Aorta (tissue), 5 donors: ENCODE measurements at regions of chrX and their contacts with region 1.

Region 1: GRCh38 chrX:23901805-23902204 is 5.9 kb downstream of the APOO start:
- DNase-seq: no peak
- ATAC-seq: peak; percentile 93
- H3K4me3 ChIP-seq: peak overlapping the region in 1 of 2 donors; percentile 41
- H3K27ac ChIP-seq: peak overlapping the region in 1 of 2 donors; percentile 63
- H3K4me1 ChIP-seq: no peaks in the 10 kb centered on the region
- H3K27me3 ChIP-seq: no peaks in the 10 kb centered on the region

Region 2: GRCh38 chrX:23483396-23483795 is 418.4 kb before region 1 on chrX:
- intact Hi-C with region 1: no loop called
- DNase-seq: no peak
- ATAC-seq: no peak
- H3K4me3 ChIP-seq: no peak overlapping the region
- H3K27ac ChIP-seq: no peak overlapping the region
- H3K4me1 ChIP-seq: no peaks in the 10 kb centered on the region
- H3K27me3 ChIP-seq: no peaks in the 10 kb centered on the region

Region 3: GRCh38 chrX:23694606-23695005 is 207.2 kb before region 1 on chrX:
- intact Hi-C with region 1: loop called (anchors 2 to 5 kb)
- DNase-seq: peak in 1 of 2 donors; percentile 64
- ATAC-seq: no peak
- H3K4me3 ChIP-seq: no peak overlapping the region
- H3K27ac ChIP-seq: no peak overlapping the region
- H3K4me1 ChIP-seq: no peaks in the 10 kb centered on the region
- H3K27me3 ChIP-seq: no peaks in the 10 kb centered on the region

Region 4: DNA sequence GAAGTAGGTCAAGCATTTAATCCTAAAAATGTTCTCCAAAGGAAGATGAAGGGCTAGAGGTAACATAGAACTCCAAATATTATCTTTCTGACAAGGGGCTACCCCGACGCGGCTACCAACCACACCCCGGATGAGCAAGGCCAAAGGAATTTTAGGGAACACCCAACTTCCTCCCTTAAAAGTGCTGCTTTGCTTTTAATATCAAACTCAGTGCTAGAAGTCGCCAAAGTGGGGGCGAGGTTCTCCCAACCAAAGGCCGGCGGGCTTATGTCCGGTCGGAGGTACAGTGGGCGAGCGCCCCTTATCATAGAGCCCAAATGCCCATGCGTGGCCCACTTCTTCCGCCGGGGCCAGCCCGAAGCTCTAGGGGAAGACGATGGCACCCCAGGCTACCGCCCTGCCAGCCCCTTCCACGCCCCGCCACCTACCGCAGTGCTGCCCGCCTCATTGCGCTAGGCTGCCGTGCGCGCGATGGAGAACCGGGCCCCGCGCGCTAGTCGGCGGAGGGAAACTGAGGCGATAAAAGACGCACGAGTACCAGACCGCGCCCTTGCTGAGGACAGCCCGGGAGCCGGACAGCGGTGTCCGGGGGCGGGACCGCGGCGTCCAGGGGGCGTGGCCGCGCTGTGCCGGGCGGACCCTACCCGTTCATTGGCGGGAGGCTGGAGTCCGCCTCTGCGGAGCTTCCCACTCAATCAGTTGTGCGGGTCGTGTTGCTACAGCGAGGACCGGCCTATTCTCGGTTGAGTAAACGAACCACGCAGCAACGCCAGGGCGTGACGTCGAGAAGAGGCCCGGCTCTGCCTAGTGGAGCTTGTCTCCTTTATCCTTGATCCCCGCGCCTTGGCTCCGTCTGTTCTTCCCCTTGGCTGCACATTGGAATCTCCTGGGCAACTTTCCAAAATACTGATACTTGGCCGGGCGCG is 158.8 kb before region 1 on chrX and contains the start of gene ACOT9:
- intact Hi-C with region 1: loop called in 1 of 2 experiments (anchors 5 kb)
- DNase-seq: peak; percentile 95 to 96
- ATAC-seq: peak; percentile 97
- H3K4me3 ChIP-seq: peak within 1 kb of the TSS; percentile 46 to 94
- H3K27ac ChIP-seq: peak within 1 kb of the TSS; percentile 76 to 99
- H3K4me1 ChIP-seq: no peaks in the 10 kb centered on the region
- H3K27me3 ChIP-seq: no peaks in the 10 kb centered on the region
- total RNA-seq, gene ACOT9: 59.1 to 69.1 TPM

Region 5: GRCh38 chrX:23782863-23783568 is 118.8 kb before region 1 on chrX and contains the start of gene SAT1:
- intact Hi-C with region 1: loop called (anchors 2 kb)
- DNase-seq: peak; percentile 97 to 98
- ATAC-seq: peak; percentile 97
- H3K4me3 ChIP-seq: peak within 1 kb of the TSS; percentile 78 to 95
- H3K27ac ChIP-seq: peak within 1 kb of the TSS; percentile 23 to 98
- H3K4me1 ChIP-seq: no peaks in the 10 kb centered on the region
- H3K27me3 ChIP-seq: no peaks in the 10 kb centered on the region
- total RNA-seq, gene SAT1: 269 to 353 TPM

Region 6: GRCh38 chrX:23803931-23804381 is 97.8 kb before region 1 on chrX:
- intact Hi-C with region 1: loop called in 1 of 2 experiments (anchors 5 kb)
- DNase-seq: no peak
- ATAC-seq: peak; percentile 41
- H3K4me3 ChIP-seq: no peak overlapping the region
- H3K27ac ChIP-seq: peak overlapping the region in 1 of 2 donors; percentile 21
- H3K4me1 ChIP-seq: no peaks in the 10 kb centered on the region
- H3K27me3 ChIP-seq: no peaks in the 10 kb centered on the region